MCF 10A (cell line): ENCODE measurements at regions of chr7 and their contacts with region 1.

Region 1: GRCh38 chr7:100428199-100428966 is at the start of gene ZCWPW1:
- DNase-seq: peak; percentile 96
- H3K4me3 Mint-ChIP-seq: peak within 1 kb of the TSS; percentile 82
- H3K27ac Mint-ChIP-seq: peak within 1 kb of the TSS; percentile 100
- H3K4me1 Mint-ChIP-seq: peaks cover 26% of the 10 kb centered on the region
- H3K27me3 Mint-ChIP-seq: no peaks in the 10 kb centered on the region
- CTCF ChIP-seq: no peak
- total RNA-seq, gene ZCWPW1: 6.5 and 8.5 TPM in 2 replicates

Region 2: GRCh38 chr7:100413346-100413745 is 15.0 kb before region 1 on chr7:
- CTCF ChIA-PET with region 1: no interaction called
- POLR2A ChIA-PET with region 1: interaction called, 11 read pairs
- intact Hi-C with region 1: no loop called
- DNase-seq: no peak
- H3K4me3 Mint-ChIP-seq: no peak overlapping the region
- H3K27ac Mint-ChIP-seq: no peak overlapping the region
- H3K4me1 Mint-ChIP-seq: no peaks in the 10 kb centered on the region
- H3K27me3 Mint-ChIP-seq: no peaks in the 10 kb centered on the region
- CTCF ChIP-seq: no peak

Region 3: DNA sequence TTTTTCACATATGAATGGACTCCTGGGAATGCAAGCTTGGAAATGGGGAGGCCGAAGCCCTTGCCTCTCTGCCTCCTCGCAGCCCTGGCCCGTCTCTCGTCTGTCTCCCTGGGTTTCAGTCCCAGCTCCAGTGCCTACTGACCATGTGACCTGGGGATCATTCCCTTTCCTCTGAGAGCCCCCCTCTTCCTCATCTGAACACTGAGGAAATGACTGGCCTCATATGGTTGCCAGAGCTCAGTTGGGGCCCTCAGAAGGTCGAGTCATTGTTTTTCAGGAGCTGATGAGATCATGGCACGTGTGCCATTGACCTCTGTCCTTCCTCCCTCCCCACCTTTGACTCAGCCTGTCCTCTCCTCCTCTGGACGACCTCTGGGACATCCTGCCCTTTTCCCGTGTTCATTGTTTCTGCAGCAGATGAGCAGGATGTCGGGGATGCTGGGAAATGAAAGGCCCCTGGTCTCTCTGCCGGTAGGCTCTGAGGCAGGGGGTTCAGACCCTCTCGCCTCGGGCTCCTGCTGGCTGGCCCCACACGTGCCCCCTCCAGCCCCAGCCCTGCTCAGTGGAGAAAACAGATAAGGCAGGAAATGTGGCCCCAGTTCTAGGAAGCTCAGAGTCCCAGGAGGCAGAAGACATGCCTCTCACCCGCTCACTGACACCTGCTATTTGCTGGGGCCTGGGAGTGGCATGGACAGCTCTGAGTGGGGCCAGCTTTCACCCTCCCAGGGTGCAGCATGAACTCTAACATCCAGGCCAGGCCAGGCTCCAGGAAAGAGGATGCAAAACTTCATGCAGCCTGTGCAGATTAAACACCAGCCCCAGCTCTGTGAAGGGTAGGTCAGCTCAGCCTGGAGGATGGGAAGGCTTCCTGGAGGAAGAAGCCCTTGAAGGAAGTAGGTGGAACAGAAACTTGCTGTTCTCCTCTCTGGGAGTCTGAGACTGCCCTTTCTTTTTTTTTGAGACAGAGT is 16.2 kb after region 1 on chr7:
- CTCF ChIA-PET with region 1: interaction called, 3 read pairs
- POLR2A ChIA-PET with region 1: interaction called, 27 read pairs
- intact Hi-C with region 1: no loop called
- DNase-seq: peak; percentile 45
- H3K4me3 Mint-ChIP-seq: no peak overlapping the region
- H3K27ac Mint-ChIP-seq: no peak overlapping the region
- H3K4me1 Mint-ChIP-seq: peaks cover 12% of the 10 kb centered on the region
- H3K27me3 Mint-ChIP-seq: no peaks in the 10 kb centered on the region
- CTCF ChIP-seq: no peak

Region 4: GRCh38 chr7:100611974-100612729 is 183.8 kb after region 1 on chr7 and contains the start of gene MOSPD3:
- CTCF ChIA-PET with region 1: no interaction called
- POLR2A ChIA-PET with region 1: interaction called, 12 read pairs
- intact Hi-C with region 1: no loop called
- DNase-seq: peak; percentile 99
- H3K4me3 Mint-ChIP-seq: peak within 1 kb of the TSS; percentile 92
- H3K27ac Mint-ChIP-seq: peak within 1 kb of the TSS; percentile 99
- H3K4me1 Mint-ChIP-seq: peaks cover 6% of the 10 kb centered on the region
- H3K27me3 Mint-ChIP-seq: no peaks in the 10 kb centered on the region
- CTCF ChIP-seq: no peak
- total RNA-seq, gene MOSPD3: 5.2 and 7.4 TPM in 2 replicates

Region 5: DNA sequence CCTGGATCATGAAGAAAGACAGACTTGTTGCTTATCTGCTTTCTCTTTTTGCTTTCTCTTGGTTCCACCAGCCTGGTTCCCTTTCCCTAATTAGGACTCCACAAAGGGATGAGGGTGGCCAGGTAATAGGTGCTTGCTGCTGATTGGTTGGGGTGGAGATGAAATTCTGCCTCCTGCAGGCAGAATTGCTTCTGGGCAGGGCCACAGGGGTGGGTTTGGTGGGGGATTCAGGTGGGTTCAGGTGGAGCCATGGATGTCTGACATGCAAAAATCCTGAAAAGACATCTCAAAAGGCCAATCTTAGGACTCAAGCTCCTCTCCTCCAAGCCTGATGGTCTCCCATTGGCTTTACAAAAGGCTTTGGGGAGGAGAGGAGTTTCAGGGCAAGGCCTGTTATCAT is 492.7 kb after region 1 on chr7:
- CTCF ChIA-PET with region 1: no interaction called
- POLR2A ChIA-PET with region 1: no interaction called
- intact Hi-C with region 1: no loop called
- DNase-seq: no peak
- H3K4me3 Mint-ChIP-seq: no peak overlapping the region
- H3K27ac Mint-ChIP-seq: no peak overlapping the region
- H3K4me1 Mint-ChIP-seq: no peaks in the 10 kb centered on the region
- H3K27me3 Mint-ChIP-seq: peaks cover 43% of the 10 kb centered on the region
- CTCF ChIP-seq: no peak

Region 6: DNA sequence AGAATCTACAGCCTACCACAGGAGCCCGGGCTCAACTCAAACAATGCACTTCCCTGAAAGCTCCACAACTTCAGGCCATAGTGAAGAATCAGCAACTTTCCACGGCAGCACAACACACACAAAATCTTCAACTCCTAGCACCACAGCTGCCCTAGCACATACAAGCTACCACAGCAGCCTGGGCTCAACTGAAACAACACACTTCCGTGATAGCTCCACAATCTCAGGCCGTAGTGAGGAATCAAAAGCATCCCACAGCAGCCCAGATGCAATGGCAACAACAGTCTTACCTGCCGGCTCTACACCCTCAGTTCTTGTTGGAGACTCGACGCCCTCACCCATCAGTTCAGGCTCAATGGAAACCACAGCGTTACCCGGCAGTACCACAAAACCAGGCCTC is 563.2 kb after region 1 on chr7:
- CTCF ChIA-PET with region 1: no interaction called
- POLR2A ChIA-PET with region 1: no interaction called
- intact Hi-C with region 1: no loop called
- DNase-seq: no peak
- H3K4me3 Mint-ChIP-seq: no peak overlapping the region
- H3K27ac Mint-ChIP-seq: no peak overlapping the region
- H3K4me1 Mint-ChIP-seq: no peaks in the 10 kb centered on the region
- H3K27me3 Mint-ChIP-seq: no peaks in the 10 kb centered on the region
- CTCF ChIP-seq: no peak